Naive thymus-derived CD4-positive, alpha-beta T cell (primary cell): ENCODE measurements at regions of chr17 and their contacts with region 1.

Region 1: GRCh38 chr17:72725433-72726068 is 366.9 kb downstream of the SLC39A11 start:
- DNase-seq: peak in 7 of 9 donors; percentile 22 to 57 (median 41)
- ATAC-seq: peak; percentile 60
- H3K4me3 ChIP-seq: no peak overlapping the region
- H3K4me3 Mint-ChIP-seq: peak overlapping the region in 9 of 10 donors; percentile 3 to 82 (median 48)
- H3K27ac ChIP-seq: no peak overlapping the region
- H3K27ac Mint-ChIP-seq: peak overlapping the region; percentile 76 to 97 (median 87)
- H3K4me1 ChIP-seq: peaks cover 10 to 26% of the 10 kb centered on the region in 2 donors
- H3K4me1 Mint-ChIP-seq: peaks cover 27 to 61% (median 30%) of the 10 kb centered on the region in 7 donors
- H3K27me3 ChIP-seq: no peaks in the 10 kb centered on the region
- H3K27me3 Mint-ChIP-seq: no peaks in the 10 kb centered on the region

Region 2: DNA sequence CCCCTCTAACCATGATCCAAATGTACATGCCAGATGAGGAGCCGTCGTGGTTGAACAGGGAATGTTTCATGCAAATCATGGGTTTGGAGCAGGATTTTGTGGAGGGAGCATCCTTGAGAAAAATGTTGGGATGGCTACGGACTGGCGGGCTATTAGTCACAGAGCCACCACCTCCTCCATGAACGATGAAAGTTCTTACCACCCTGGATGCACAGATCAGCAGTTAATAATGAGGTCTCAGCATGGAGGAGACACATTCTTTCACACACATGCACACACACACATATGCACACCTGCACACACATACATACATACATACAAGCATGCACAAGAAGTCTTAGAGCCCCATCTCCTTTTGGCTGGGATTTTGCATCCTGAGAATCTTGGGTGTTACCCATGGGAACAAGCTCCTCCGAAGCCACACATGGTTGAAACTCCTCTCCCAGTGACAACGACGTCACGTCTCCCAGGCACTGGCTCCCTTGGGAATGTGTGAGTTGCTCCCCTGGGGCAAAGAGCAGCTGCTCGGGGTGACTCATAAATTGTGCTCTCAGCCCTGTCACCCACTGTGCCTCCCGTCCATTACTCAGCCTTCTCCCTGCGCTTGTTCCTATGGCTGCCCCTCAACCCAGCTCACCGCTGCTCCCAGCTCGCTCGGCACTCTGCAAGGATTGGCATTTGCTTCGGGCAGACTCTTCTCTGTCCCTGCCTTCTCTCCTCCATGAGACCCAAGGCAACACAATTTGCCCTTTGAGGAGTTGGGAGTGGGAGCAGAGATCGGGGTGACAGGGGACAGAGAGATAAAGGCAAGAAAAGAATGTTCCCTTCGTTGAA is 260.1 kb before region 1 on chr17:
- CTCF ChIA-PET with region 1: no interaction called
- POLR2A ChIA-PET with region 1: no interaction called
- intact Hi-C with region 1: no loop called
- DNase-seq: no peak
- ATAC-seq: no peak
- H3K4me3 ChIP-seq: no peak overlapping the region
- H3K4me3 Mint-ChIP-seq: no peak overlapping the region
- H3K27ac ChIP-seq: no peak overlapping the region
- H3K27ac Mint-ChIP-seq: no peak overlapping the region
- H3K4me1 ChIP-seq: no peaks in the 10 kb centered on the region
- H3K4me1 Mint-ChIP-seq: no peaks in the 10 kb centered on the region
- H3K27me3 ChIP-seq: no peaks in the 10 kb centered on the region
- H3K27me3 Mint-ChIP-seq: peaks cover 0 to 19% (median 4%) of the 10 kb centered on the region in 5 donors

Region 3: DNA sequence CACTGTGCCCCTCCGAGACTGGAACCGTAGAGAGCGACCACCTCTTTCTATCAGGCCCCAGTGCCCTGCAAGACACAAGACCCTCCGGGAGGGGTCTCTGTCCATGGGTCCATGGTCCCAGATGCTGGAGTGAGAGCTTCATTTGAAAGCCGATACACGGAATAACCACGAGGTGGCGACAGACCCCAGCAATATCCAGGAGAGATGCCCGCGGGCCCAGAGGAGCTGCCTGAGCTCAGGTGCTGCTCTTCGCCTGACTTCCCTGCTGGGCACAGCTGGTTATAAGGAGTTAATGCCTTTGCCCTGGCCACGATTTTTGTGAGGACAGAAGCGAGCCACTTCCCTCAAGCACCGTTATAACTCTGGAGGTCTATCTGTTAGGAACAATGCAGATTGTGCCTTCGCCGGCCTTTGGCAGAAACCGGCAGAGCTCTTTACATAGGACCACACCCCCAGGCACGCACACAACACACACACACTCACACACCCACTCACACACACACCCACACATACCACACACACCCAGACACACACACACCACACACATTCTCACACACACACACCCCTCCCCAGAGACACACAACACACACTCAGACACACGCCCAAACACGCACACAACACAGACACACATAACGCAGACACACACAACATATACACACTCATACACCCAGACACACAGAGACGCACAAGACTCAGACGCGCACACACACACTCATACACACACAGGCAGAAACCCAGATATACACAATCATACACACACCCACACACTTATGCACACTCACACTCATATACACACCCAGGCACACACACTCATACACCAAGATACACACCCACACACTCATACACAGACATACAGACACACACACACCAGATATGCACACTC is 168.4 kb before region 1 on chr17:
- CTCF ChIA-PET with region 1: interaction called, 63 read pairs
- POLR2A ChIA-PET with region 1: no interaction called
- intact Hi-C with region 1: loop called (anchors 1 kb)
- DNase-seq: peak in 8 of 9 donors; percentile 25 to 59 (median 42)
- ATAC-seq: peak; percentile 64
- H3K4me3 ChIP-seq: no peak overlapping the region
- H3K4me3 Mint-ChIP-seq: no peak overlapping the region
- H3K27ac ChIP-seq: no peak overlapping the region
- H3K27ac Mint-ChIP-seq: no peak overlapping the region
- H3K4me1 ChIP-seq: no peaks in the 10 kb centered on the region
- H3K4me1 Mint-ChIP-seq: peaks cover 0 to 2% (median 0%) of the 10 kb centered on the region in 7 donors
- H3K27me3 ChIP-seq: no peaks in the 10 kb centered on the region
- H3K27me3 Mint-ChIP-seq: peaks cover 0 to 5% (median 4%) of the 10 kb centered on the region in 5 donors

Region 4: DNA sequence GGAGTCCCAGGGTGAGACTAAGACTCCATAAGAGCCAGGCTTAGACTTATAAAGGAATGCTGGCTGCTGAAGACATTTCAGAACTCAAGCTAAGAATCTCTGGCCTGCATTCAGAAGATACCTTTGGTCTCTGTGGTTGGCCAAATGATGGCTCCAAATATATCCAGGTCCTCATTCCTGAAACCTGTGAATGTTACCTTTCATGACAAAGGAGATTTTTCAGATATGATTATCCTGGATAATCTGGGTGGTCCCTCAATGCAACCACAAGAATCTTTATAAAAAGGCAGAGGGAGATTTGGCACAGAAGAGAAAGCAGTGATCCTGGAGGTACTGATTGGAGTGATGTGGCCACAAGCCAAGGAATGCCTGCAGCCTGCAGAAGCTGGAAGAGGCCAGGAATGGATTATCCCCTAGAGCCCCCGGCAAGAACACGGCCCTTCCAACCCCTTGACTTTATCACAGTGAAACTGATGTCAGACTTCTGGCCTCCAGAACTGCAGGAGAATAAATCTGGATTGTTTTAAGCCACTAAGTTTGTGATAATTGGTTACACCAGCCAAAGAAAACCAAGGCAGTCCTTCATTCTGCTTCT is 113.7 kb after region 1 on chr17:
- CTCF ChIA-PET with region 1: no interaction called
- POLR2A ChIA-PET with region 1: no interaction called
- intact Hi-C with region 1: no loop called
- DNase-seq: no peak
- ATAC-seq: no peak
- H3K4me3 ChIP-seq: no peak overlapping the region
- H3K4me3 Mint-ChIP-seq: no peak overlapping the region
- H3K27ac ChIP-seq: no peak overlapping the region
- H3K27ac Mint-ChIP-seq: no peak overlapping the region
- H3K4me1 ChIP-seq: no peaks in the 10 kb centered on the region
- H3K4me1 Mint-ChIP-seq: no peaks in the 10 kb centered on the region
- H3K27me3 ChIP-seq: no peaks in the 10 kb centered on the region
- H3K27me3 Mint-ChIP-seq: no peaks in the 10 kb centered on the region

Region 5: GRCh38 chr17:72863526-72864211 is 138.1 kb after region 1 on chr17:
- CTCF ChIA-PET with region 1: no interaction called
- POLR2A ChIA-PET with region 1: no interaction called
- intact Hi-C with region 1: no loop called
- DNase-seq: no peak
- ATAC-seq: no peak
- H3K4me3 ChIP-seq: no peak overlapping the region
- H3K4me3 Mint-ChIP-seq: no peak overlapping the region
- H3K27ac ChIP-seq: no peak overlapping the region
- H3K27ac Mint-ChIP-seq: no peak overlapping the region
- H3K4me1 ChIP-seq: no peaks in the 10 kb centered on the region
- H3K4me1 Mint-ChIP-seq: peaks cover 0 to 26% (median 0%) of the 10 kb centered on the region in 7 donors
- H3K27me3 ChIP-seq: no peaks in the 10 kb centered on the region
- H3K27me3 Mint-ChIP-seq: no peaks in the 10 kb centered on the region

Region 6: GRCh38 chr17:72985881-72986720 is 260.6 kb after region 1 on chr17:
- CTCF ChIA-PET with region 1: interaction called, 15 read pairs
- POLR2A ChIA-PET with region 1: no interaction called
- intact Hi-C with region 1: loop called (anchors 1 to 2 kb)
- DNase-seq: peak; percentile 12 to 60 (median 31)
- ATAC-seq: peak; percentile 74
- H3K4me3 ChIP-seq: no peak overlapping the region
- H3K4me3 Mint-ChIP-seq: no peak overlapping the region
- H3K27ac ChIP-seq: no peak overlapping the region
- H3K27ac Mint-ChIP-seq: peak overlapping the region in 1 of 9 donors; percentile 33
- H3K4me1 ChIP-seq: no peaks in the 10 kb centered on the region
- H3K4me1 Mint-ChIP-seq: peaks cover 0 to 3% (median 0%) of the 10 kb centered on the region in 7 donors
- H3K27me3 ChIP-seq: no peaks in the 10 kb centered on the region
- H3K27me3 Mint-ChIP-seq: no peaks in the 10 kb centered on the region

Region 7: GRCh38 chr17:73192894-73193701 is 467.5 kb after region 1 on chr17 and contains the start of gene COG1:
- CTCF ChIA-PET with region 1: interaction called, 7 read pairs
- POLR2A ChIA-PET with region 1: interaction called, 7 read pairs
- intact Hi-C with region 1: loop called (anchors 1 kb)
- DNase-seq: peak; percentile 59 to 90 (median 70)
- ATAC-seq: peak; percentile 92
- H3K4me3 ChIP-seq: peak within 1 kb of the TSS; percentile 97
- H3K4me3 Mint-ChIP-seq: peak within 1 kb of the TSS; percentile 92 to 100 (median 96)
- H3K27ac ChIP-seq: peak within 1 kb of the TSS; percentile 91
- H3K27ac Mint-ChIP-seq: peak within 1 kb of the TSS; percentile 93 to 98 (median 97)
- H3K4me1 ChIP-seq: peaks cover 14 to 18% of the 10 kb centered on the region in 2 donors
- H3K4me1 Mint-ChIP-seq: peaks cover 17 to 47% (median 38%) of the 10 kb centered on the region in 7 donors
- H3K27me3 ChIP-seq: no peaks in the 10 kb centered on the region
- H3K27me3 Mint-ChIP-seq: no peaks in the 10 kb centered on the region
- total RNA-seq, gene COG1: 35.0 to 92.7 (median 85.8) TPM

Region 8: DNA sequence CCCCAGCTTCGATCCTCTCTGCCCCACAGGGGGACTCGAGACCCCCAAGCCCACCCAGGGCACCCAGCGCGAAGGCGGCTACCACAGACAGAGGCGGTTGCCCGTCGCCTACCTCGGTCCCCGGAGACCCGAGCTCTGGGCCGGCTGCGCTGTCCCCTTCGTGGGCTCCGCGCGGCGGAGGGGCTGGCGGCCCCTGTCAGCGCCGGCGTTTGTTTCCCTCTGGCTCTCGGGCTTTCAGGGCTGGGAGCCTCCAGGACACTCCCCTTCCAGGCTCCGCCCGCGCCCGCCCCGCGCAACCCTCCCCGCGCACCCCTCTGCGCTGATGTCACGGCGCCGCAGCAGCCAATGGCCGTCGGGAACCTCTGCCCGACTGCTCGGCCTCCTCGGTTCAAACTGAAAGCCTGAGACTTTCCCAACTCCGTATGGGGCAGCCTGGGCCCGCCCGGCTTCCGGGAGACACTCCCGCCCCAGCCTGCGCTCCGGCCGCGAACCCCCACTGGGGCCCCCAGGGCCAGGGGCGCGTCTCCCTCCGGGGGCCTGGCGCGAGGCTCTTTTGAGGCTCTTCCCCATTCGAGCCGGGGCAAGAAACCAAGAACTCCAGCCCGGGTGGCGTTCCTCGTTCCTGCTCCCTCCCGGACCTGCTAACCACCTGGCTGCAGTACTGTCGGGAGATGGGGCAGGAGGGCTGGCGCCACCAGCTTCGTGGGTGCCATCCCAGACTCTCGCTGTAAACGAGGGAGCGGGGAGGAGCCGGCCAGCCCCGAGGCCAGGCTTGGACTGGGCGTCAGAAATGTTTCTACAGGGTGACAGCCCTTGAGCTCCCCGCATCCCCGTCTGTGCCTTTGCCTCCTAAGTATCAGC is 586.5 kb after region 1 on chr17 and contains the start of gene CDC42EP4:
- CTCF ChIA-PET with region 1: interaction called, 5 read pairs
- POLR2A ChIA-PET with region 1: no interaction called
- intact Hi-C with region 1: loop called (anchors 2 to 5 kb)
- DNase-seq: peak; percentile 70 to 89 (median 76)
- ATAC-seq: peak; percentile 94
- H3K4me3 ChIP-seq: peak within 1 kb of the TSS; percentile 80
- H3K4me3 Mint-ChIP-seq: peak within 1 kb of the TSS; percentile 84 to 91 (median 88)
- H3K27ac ChIP-seq: peak within 1 kb of the TSS; percentile 75
- H3K27ac Mint-ChIP-seq: peak within 1 kb of the TSS in 8 of 9 donors; percentile 5 to 86 (median 62)
- H3K4me1 ChIP-seq: peaks cover 9 to 10% of the 10 kb centered on the region in 2 donors
- H3K4me1 Mint-ChIP-seq: peaks cover 8 to 19% (median 13%) of the 10 kb centered on the region in 7 donors
- H3K27me3 ChIP-seq: no peaks in the 10 kb centered on the region
- H3K27me3 Mint-ChIP-seq: peaks cover 0 to 13% (median 0%) of the 10 kb centered on the region in 5 donors
- total RNA-seq, gene CDC42EP4: 1.4 to 15.8 (median 2.0) TPM

Region 9: GRCh38 chr17:73710095-73710592 is 984.6 kb after region 1 on chr17:
- CTCF ChIA-PET with region 1: no interaction called
- POLR2A ChIA-PET with region 1: no interaction called
- intact Hi-C with region 1: loop called in 1 of 2 experiments (anchors 5 kb)
- DNase-seq: peak; percentile 40 to 81 (median 62)
- ATAC-seq: peak; percentile 83
- H3K4me3 ChIP-seq: no peak overlapping the region
- H3K4me3 Mint-ChIP-seq: peak overlapping the region in 5 of 10 donors; percentile 1 to 40 (median 34)
- H3K27ac ChIP-seq: no peak overlapping the region
- H3K27ac Mint-ChIP-seq: peak overlapping the region in 5 of 9 donors; percentile 12 to 88 (median 72)
- H3K4me1 ChIP-seq: peaks cover 0 to 11% of the 10 kb centered on the region in 2 donors
- H3K4me1 Mint-ChIP-seq: peaks cover 11 to 19% (median 17%) of the 10 kb centered on the region in 7 donors
- H3K27me3 ChIP-seq: no peaks in the 10 kb centered on the region
- H3K27me3 Mint-ChIP-seq: peaks cover 0 to 19% (median 0%) of the 10 kb centered on the region in 5 donors

Region 10: GRCh38 chr17:73998653-73999645 is 1273.4 kb after region 1 on chr17:
- CTCF ChIA-PET with region 1: no interaction called
- POLR2A ChIA-PET with region 1: no interaction called
- intact Hi-C with region 1: loop called in 1 of 2 experiments (anchors 2 kb)
- DNase-seq: peak; percentile 24 to 70 (median 54)
- ATAC-seq: peak; percentile 84
- H3K4me3 ChIP-seq: no peak overlapping the region
- H3K4me3 Mint-ChIP-seq: no peak overlapping the region
- H3K27ac ChIP-seq: no peak overlapping the region
- H3K27ac Mint-ChIP-seq: no peak overlapping the region
- H3K4me1 ChIP-seq: no peaks in the 10 kb centered on the region
- H3K4me1 Mint-ChIP-seq: peaks cover 0 to 8% (median 0%) of the 10 kb centered on the region in 7 donors
- H3K27me3 ChIP-seq: no peaks in the 10 kb centered on the region
- H3K27me3 Mint-ChIP-seq: peaks cover under 1 to 24% (median 14%) of the 10 kb centered on the region in 5 donors